ENCODE measurements at regions of chr6 and their contacts with region 1.

Region 1: GRCh38 chr6:42217519-42218367 is at the start of gene MRPS10:
- DNase-seq: peak; percentile 78 to 87
- H3K4me3 ChIP-seq: peak within 1 kb of the TSS; percentile 93 to 97 (median 94)
- H3K27ac ChIP-seq: peak within 1 kb of the TSS; percentile 52
- H3K4me1 ChIP-seq: no peaks in the 10 kb centered on the region; a peak in 1 of 7 replicates
- H3K27me3 ChIP-seq: no peaks in the 10 kb centered on the region
- CTCF ChIP-seq: no peak
- EP300 ChIP-seq: no peak
- POLR2A ChIP-seq: peak; percentile 68 to 94
- RAD21 ChIP-seq: 0 out of 4 replicates have a peak, but pooled peaks of 1 of the 2 experiments have one; percentile 2
- total RNA-seq, gene MRPS10: 32.0 and 33.6 TPM in 2 replicates

Region 2: GRCh38 chr6:42075159-42075838 is 142.4 kb before region 1 on chr6:
- CTCF ChIA-PET with region 1: interaction called, 23 read pairs
- POLR2A ChIA-PET with region 1: no interaction called
- DNase-seq: peak in 1 of 2 experiments; percentile 90
- H3K4me3 ChIP-seq: no peak overlapping the region
- H3K27ac ChIP-seq: no peak overlapping the region
- H3K4me1 ChIP-seq: no peaks in the 10 kb centered on the region
- H3K27me3 ChIP-seq: no peaks in the 10 kb centered on the region
- CTCF ChIP-seq: peak; percentile 81 to 90 (median 83)
- EP300 ChIP-seq: no peak
- POLR2A ChIP-seq: no peak
- RAD21 ChIP-seq: peak; percentile 88 to 91

Region 3: GRCh38 chr6:42095785-42096541 is 121.8 kb before region 1 on chr6:
- CTCF ChIA-PET with region 1: interaction called, 14 read pairs
- POLR2A ChIA-PET with region 1: interaction called, 5 read pairs
- DNase-seq: peak in 1 of 2 experiments; percentile 64
- H3K4me3 ChIP-seq: no peak overlapping the region
- H3K27ac ChIP-seq: no peak overlapping the region
- H3K4me1 ChIP-seq: peaks cover 0 to 7% (median 5%) of the 10 kb centered on the region in 4 experiments; a peak in 4 of 7 replicates
- H3K27me3 ChIP-seq: peaks cover 0 to 41% (median 37%) of the 10 kb centered on the region in 4 experiments; a peak in 6 of 7 replicates
- CTCF ChIP-seq: peak; percentile 22 to 48 (median 48)
- EP300 ChIP-seq: no peak
- POLR2A ChIP-seq: no peak; a peak in 1 of 3 replicates
- RAD21 ChIP-seq: peak; percentile 36 to 46; a peak in 2 of 4 replicates

Region 4: DNA sequence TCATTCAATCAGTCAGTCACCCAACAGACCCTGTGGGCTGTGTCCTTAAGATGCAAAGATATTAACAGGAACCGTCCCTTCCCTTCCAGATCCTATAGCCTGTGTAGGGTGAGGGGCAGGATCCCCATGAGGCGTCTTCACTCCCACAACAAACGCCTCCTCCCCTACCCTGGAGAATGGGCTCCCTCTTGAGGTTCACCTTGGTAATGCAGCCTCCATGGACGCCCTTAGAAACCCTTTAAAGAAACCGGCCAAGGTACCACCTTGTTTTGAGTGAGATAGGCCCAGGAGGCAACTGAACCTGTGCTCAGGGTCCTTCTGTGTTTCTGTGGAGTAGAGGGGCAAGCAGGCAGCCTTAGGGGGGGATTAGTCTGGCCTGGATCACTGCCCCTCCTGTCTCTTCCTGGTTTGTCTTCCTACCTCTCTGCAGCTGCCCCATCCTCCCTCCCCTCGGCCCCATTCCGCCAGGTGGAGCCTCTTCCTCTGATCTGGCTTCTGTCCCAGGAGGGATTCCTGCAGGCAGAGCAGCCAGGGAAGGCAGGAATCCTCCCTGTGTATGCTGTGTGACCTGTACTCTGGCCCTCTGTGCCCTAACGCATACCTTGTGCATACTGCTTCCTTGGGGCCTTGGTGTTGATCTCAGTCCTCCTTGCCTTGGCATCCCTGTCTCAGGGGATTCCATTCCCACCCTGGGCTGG is 51.1 kb before region 1 on chr6:
- CTCF ChIA-PET with region 1: interaction called, 16 read pairs
- POLR2A ChIA-PET with region 1: interaction called, 3 read pairs
- DNase-seq: peak; percentile 77 to 97
- H3K4me3 ChIP-seq: no peak overlapping the region
- H3K27ac ChIP-seq: peak overlapping the region; percentile 48
- H3K4me1 ChIP-seq: peaks cover 7 to 22% (median 11%) of the 10 kb centered on the region in 4 experiments
- H3K27me3 ChIP-seq: no peaks in the 10 kb centered on the region; a peak in 1 of 7 replicates
- CTCF ChIP-seq: peak; percentile 80 to 93 (median 89)
- EP300 ChIP-seq: no peak
- POLR2A ChIP-seq: no peak
- RAD21 ChIP-seq: peak; percentile 91 to 93

Region 5: DNA sequence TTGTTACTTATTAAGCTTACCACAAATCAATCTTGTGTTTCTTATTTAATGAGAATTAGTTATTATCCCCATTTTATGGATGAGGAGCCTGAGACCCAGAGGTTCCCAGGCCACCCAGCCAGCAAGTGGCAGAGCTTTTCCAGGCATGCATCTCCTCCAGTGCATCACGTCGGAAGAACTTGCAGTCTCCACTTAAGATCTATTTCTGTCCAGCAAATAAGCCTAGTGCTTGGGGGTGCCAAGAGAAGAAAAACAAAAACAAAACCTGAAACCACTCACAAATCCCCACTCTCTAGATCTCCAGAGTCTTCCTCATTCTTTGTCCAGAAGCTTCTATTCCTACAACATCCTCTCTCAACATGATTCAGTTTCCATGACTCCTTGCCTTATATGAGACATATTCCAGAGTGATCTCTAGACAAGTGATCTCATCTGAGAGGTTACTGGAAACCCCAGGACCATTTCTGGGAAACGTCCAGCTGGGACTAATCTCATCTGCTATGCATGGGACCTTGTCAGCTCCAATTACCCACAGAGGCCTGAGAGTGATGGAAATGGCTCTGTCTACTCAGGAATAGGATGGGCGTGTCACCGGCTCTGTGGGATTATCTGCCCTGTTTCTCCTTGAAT is 27.1 kb before region 1 on chr6:
- CTCF ChIA-PET with region 1: interaction called, 26 read pairs
- POLR2A ChIA-PET with region 1: interaction called, 4 read pairs
- DNase-seq: no peak
- H3K4me3 ChIP-seq: no peak overlapping the region
- H3K27ac ChIP-seq: no peak overlapping the region
- H3K4me1 ChIP-seq: peaks cover 2 to 6% (median 4%) of the 10 kb centered on the region in 4 experiments
- H3K27me3 ChIP-seq: peaks cover 0 to 3% (median 0%) of the 10 kb centered on the region in 4 experiments; a peak in 1 of 7 replicates
- CTCF ChIP-seq: no peak
- EP300 ChIP-seq: no peak
- POLR2A ChIP-seq: no peak
- RAD21 ChIP-seq: no peak

Region 6: DNA sequence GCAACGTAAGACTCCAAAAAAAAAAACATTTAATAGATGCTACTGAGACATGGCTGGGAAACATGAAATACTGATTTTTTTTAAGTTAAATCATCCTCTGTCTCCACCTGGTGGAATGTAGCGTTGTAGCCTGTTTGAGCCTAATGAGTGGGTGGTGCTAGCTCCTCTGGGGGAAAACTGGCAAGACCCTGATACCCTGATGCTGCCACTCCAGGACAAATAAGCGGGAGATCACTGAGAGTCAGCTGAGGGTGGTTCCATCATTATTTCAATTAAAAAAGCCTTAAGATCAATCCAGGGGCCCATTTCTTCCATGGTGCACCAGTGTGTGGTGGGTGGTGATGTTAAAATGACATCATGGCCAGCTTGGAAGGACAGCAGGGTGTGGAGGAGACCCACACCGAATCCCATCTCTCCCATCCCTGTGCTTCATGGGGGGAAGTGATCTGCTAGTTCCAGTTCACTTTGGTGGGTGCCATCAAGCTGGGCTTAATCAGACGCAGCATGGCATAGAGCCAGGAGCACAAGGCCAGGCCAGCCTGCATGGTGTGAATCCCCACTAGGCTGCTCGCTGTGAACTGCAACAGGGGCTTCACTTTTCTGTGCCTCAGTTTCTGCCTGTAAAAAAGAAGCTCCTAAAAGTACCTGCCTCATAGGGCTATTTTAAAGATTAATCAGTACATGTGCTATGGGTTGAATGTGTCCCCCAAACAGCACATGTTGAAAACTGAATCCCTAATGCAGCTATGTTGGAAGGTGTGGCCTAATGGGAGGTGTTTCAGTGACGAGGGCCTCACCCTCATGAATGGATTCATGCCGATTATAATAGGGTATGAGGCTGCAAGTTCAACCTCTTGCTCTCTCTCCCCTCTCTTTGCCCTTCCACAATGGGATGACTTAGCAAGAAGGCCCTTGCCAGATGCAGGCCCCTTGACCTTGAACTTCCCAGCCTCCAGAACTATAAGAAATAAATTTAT is 12.9 kb after region 1 on chr6:
- CTCF ChIA-PET with region 1: interaction called, 52 read pairs
- POLR2A ChIA-PET with region 1: interaction called, 3 read pairs
- DNase-seq: no peak
- H3K4me3 ChIP-seq: no peak overlapping the region
- H3K27ac ChIP-seq: no peak overlapping the region
- H3K4me1 ChIP-seq: no peaks in the 10 kb centered on the region
- H3K27me3 ChIP-seq: no peaks in the 10 kb centered on the region
- CTCF ChIP-seq: peak; percentile 2 to 46 (median 45)
- EP300 ChIP-seq: no peak
- POLR2A ChIP-seq: no peak
- RAD21 ChIP-seq: peak; percentile 35 to 50

Measured in H1 (cell line).